AG04449 (cell line): ENCODE measurements at regions of chr18 and their contacts with region 1.

Region 1: GRCh38 chr18:3703732-3704176 is 253.8 kb downstream of the TGIF1 start:
- DNase-seq: peak; percentile 12
- H3K4me3 ChIP-seq: no peak overlapping the region
- CTCF ChIP-seq: peak; percentile 81

Region 2: DNA sequence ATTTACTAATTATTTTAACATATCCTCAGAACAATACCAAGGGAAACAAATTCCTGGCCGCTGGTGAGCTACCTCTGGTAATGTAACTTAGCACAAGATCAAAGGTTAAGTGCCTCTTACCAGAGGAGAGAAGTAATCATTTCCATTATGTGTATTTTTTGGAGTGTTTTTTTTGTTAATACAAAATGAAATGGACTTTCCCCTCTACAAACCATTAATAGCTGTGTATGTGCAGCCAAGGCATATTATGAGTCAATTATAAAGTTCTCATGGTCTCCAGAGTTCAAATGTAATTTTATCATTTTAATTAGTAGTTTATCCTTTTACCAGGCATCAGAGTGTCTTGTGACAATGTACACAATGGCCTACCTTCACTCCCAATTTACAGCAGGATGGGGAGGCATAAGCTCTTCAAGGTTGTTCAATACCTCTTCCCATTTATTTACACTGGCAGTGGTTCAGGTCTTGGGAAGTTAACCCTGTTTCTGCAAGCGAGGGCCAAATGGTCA is 11.6 kb before region 1 on chr18:
- CTCF ChIA-PET with region 1: interaction called, 33 read pairs
- POLR2A ChIA-PET with region 1: no interaction called
- DNase-seq: no peak
- H3K4me3 ChIP-seq: no peak overlapping the region
- CTCF ChIP-seq: no peak

Region 3: DNA sequence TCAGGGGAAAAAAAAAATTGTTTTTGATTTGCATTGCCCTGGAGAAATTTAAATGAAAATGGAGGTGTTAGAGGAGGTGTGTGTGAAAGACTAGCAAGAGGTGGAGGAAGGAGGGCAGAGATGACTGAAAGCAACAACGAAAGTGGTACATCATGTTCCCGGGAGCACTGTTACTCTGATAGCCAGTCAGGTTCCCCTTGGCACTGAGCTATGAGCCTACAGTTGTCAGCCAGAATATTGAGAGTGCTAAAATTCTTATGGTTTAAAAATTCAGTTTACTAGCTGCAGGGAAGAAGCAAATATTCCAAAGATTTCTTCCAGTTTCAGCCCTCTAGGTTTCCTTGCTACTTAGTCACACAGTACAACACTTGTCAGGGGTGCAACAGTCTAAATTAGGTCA is 1118.0 kb after region 1 on chr18:
- CTCF ChIA-PET with region 1: no interaction called
- POLR2A ChIA-PET with region 1: no interaction called
- DNase-seq: no peak
- H3K4me3 ChIP-seq: no peak overlapping the region
- CTCF ChIP-seq: no peak